ENCODE measurements at regions of chr13 and their contacts with region 1.

Region 1: DNA sequence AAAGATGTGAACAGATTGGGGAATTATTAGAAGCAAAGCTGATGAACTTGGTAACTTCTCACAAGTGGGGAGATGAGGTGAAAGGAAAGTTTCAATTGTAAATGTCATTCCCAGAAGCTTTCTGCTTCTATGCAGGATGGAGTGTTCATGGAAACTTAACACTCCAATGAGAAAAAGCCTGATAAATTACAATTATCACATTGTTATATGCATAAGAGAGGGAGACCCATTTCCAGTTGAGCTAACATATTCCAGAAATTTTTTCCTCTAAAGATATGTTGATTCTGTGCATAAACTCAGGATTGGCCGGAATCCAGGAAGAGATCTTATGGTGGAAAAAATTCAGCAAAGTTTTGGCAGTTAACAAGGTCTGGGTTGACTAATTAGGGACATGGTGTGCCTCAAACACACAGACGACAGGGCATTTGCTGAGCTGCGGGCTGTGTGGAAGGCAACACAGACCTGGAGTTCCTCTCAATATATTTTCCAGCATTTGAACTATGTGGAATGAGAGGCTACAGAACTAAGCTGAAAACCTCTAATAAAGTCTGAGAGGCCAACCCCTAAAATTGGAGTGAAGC is 64.9 kb upstream of the FGF14 start:
- DNase-seq: no peak
- ATAC-seq: no peak
- H3K4me3 ChIP-seq: no peak overlapping the region
- H3K27ac ChIP-seq: no peak overlapping the region
- H3K4me1 ChIP-seq: no peaks in the 10 kb centered on the region
- H3K27me3 ChIP-seq: no peaks in the 10 kb centered on the region
- CTCF ChIP-seq: no peak
- EP300 ChIP-seq: no peak
- POLR2A ChIP-seq: no peak
- RAD21 ChIP-seq: no peak

Region 2: DNA sequence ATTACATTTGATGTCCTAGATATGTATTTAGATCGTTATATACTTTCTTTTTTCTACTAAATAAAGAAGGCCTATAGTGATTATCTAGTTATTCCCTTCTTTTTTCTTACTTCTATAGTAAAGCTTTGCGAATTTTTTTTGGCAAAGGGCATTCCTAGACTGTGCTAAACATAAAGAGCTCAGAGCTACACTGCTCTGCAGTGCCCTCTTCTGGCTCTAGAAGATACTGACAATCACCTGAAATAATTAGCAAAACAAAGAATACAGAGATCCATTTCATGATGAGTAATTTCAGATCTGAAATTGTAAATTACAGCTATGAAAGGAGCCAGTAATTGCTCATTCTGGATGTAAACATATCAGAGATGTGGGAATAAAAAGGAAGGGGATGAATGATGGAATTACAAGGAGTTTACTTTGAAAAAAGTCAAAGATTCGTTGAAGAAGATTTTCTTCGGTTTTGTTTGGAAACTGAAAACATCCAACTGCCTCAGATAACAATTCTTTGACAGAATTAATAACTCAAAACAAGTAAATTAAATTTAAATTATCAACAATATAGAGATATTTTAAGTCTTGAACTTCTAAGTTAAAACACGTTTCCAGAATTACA is 1338.9 kb before region 1 on chr13:
- CTCF ChIA-PET with region 1: no interaction called
- POLR2A ChIA-PET with region 1: no interaction called
- RAD21 ChIA-PET with region 1: no interaction called
- SMC1A ChIA-PET with region 1: no interaction called
- in situ Hi-C with region 1: loop called (anchors 25 kb)
- intact Hi-C with region 1: no loop called
- DNase-seq: no peak
- ATAC-seq: peak; percentile 90
- H3K4me3 ChIP-seq: no peak overlapping the region
- H3K27ac ChIP-seq: no peak overlapping the region
- H3K4me1 ChIP-seq: no peaks in the 10 kb centered on the region
- H3K27me3 ChIP-seq: no peaks in the 10 kb centered on the region
- CTCF ChIP-seq: peak; percentile 61 to 76 (median 68)
- EP300 ChIP-seq: no peak
- POLR2A ChIP-seq: no peak
- RAD21 ChIP-seq: peak; percentile 75

Region 3: DNA sequence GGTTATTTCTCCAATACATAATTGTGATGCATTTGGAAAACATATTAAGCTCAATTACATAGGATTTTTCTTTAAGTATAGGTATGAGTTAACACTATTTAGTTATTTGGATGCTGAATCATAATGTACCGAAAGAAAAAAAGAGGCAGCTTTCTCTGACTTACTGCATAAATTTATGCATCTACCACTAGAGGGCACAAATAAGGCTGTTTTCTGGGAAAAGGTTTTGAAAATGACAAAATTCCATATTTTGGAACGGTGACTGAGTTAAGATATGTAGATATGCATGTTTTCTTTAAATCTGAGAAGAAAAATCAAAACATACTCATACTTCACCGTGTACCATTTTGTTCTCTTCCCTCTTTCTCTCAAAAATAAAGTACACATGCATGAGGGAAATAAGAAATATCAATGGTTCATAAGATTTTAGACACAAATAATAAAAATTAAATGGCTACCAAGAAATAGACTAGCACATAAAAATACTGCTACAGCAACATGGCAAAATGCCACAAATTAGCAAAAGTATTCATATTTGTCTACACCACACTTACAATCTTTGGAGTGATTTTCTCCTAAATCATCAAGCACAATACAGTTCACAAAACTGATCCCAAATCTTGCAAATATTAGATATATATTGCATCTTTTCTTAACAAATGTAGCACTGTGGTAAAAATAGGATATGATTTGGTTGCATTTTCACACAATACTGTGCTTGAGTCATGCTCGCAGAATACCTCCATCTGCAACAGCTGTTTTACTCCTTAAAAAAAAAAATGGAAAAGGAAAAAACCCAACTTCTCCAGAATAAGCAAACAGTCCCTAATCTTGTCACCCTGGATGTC is 324.9 kb before region 1 on chr13:
- CTCF ChIA-PET with region 1: no interaction called
- POLR2A ChIA-PET with region 1: no interaction called
- RAD21 ChIA-PET with region 1: no interaction called
- SMC1A ChIA-PET with region 1: no interaction called
- in situ Hi-C with region 1: loop called (anchors 25 kb)
- intact Hi-C with region 1: no loop called
- DNase-seq: no peak
- ATAC-seq: peak; percentile 45; the same call in 2 of the 3 replicates
- H3K4me3 ChIP-seq: no peak overlapping the region
- H3K27ac ChIP-seq: no peak overlapping the region
- H3K4me1 ChIP-seq: no peaks in the 10 kb centered on the region
- H3K27me3 ChIP-seq: no peaks in the 10 kb centered on the region
- CTCF ChIP-seq: peak; percentile 52 to 63 (median 55)
- EP300 ChIP-seq: no peak
- POLR2A ChIP-seq: no peak
- RAD21 ChIP-seq: peak; percentile 39

Region 4: DNA sequence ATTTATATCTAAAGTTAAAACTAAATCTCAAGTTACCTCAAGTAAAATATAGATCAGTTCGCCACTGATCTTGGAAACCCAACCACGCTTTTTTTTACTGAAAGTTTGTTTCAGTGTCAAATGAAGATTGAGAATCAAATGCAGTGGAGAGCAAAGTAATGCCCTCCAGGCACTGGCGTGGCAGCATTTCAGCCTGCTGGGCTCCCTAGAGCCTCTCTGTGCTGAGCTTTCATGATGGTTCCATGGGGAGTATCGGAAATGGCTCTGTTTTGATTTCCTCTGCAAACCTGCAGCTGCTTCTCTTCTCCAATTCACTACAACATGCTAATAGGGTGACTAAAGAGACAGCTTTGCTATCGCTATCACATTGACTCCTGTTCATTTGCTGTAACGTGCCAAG is 206.5 kb before region 1 on chr13:
- CTCF ChIA-PET with region 1: no interaction called
- POLR2A ChIA-PET with region 1: no interaction called
- RAD21 ChIA-PET with region 1: no interaction called
- SMC1A ChIA-PET with region 1: no interaction called
- in situ Hi-C with region 1: no loop called
- intact Hi-C with region 1: no loop called
- DNase-seq: no peak
- ATAC-seq: no peak
- H3K4me3 ChIP-seq: no peak overlapping the region
- H3K27ac ChIP-seq: no peak overlapping the region
- H3K4me1 ChIP-seq: no peaks in the 10 kb centered on the region
- H3K27me3 ChIP-seq: no peaks in the 10 kb centered on the region
- CTCF ChIP-seq: no peak
- EP300 ChIP-seq: no peak
- POLR2A ChIP-seq: no peak
- RAD21 ChIP-seq: no peak

Region 5: GRCh38 chr13:102940143-102940542 is 473.4 kb after region 1 on chr13:
- CTCF ChIA-PET with region 1: no interaction called
- POLR2A ChIA-PET with region 1: no interaction called
- RAD21 ChIA-PET with region 1: no interaction called
- SMC1A ChIA-PET with region 1: no interaction called
- in situ Hi-C with region 1: no loop called
- intact Hi-C with region 1: no loop called
- DNase-seq: no peak
- ATAC-seq: no peak
- H3K4me3 ChIP-seq: no peak overlapping the region
- H3K27ac ChIP-seq: no peak overlapping the region
- H3K4me1 ChIP-seq: peaks cover 10% of the 10 kb centered on the region; the same call in 1 of the 2 replicates
- H3K27me3 ChIP-seq: no peaks in the 10 kb centered on the region
- CTCF ChIP-seq: peak in 1 of 3 experiments; percentile 12; a peak in 1 of 6 replicates
- EP300 ChIP-seq: no peak
- POLR2A ChIP-seq: no peak
- RAD21 ChIP-seq: no peak

Measured in GM12878 (cell line).